K562 (cell line): ENCODE measurements at regions of chr15 and their contacts with region 1.

Region 1: GRCh38 chr15:32750979-32751378 is 33.2 kb downstream of the GREM1 start:
- DNase-seq: no peak
- ATAC-seq: no peak
- H3K4me3 ChIP-seq: no peak overlapping the region
- H3K27ac ChIP-seq: no peak overlapping the region
- H3K4me1 ChIP-seq: no peaks in the 10 kb centered on the region
- H3K27me3 ChIP-seq: peaks cover 0 to 3% of the 10 kb centered on the region in 2 experiments; a peak in 1 of 5 replicates
- CTCF ChIP-seq: no peak
- EP300 ChIP-seq: no peak
- POLR2A ChIP-seq: no peak
- RAD21 ChIP-seq: no peak

Region 2: GRCh38 chr15:32763295-32763694 is 12.3 kb after region 1 on chr15:
- CTCF ChIA-PET with region 1: no interaction called
- POLR2A ChIA-PET with region 1: no interaction called
- in situ Hi-C with region 1: no loop called
- intact Hi-C with region 1: no loop called
- DNase-seq: no peak
- ATAC-seq: no peak
- H3K4me3 ChIP-seq: no peak overlapping the region
- H3K27ac ChIP-seq: no peak overlapping the region
- H3K4me1 ChIP-seq: no peaks in the 10 kb centered on the region
- H3K27me3 ChIP-seq: peaks cover 0 to 4% of the 10 kb centered on the region in 2 experiments; a peak in 2 of 5 replicates
- CTCF ChIP-seq: no peak
- EP300 ChIP-seq: no peak
- POLR2A ChIP-seq: no peak
- RAD21 ChIP-seq: no peak

Region 3: GRCh38 chr15:32802286-32802936 is 51.4 kb after region 1 on chr15:
- CTCF ChIA-PET with region 1: no interaction called
- POLR2A ChIA-PET with region 1: no interaction called
- in situ Hi-C with region 1: no loop called
- intact Hi-C with region 1: loop called (anchors 10 kb)
- DNase-seq: no peak
- ATAC-seq: no peak
- H3K4me3 ChIP-seq: no peak overlapping the region
- H3K27ac ChIP-seq: no peak overlapping the region
- H3K4me1 ChIP-seq: no peaks in the 10 kb centered on the region
- H3K27me3 ChIP-seq: peaks cover 0 to 4% of the 10 kb centered on the region in 2 experiments; a peak in 2 of 5 replicates
- CTCF ChIP-seq: no peak
- EP300 ChIP-seq: no peak
- POLR2A ChIP-seq: no peak
- RAD21 ChIP-seq: no peak

Region 4: GRCh38 chr15:33419701-33420100 is 668.7 kb after region 1 on chr15:
- CTCF ChIA-PET with region 1: no interaction called
- POLR2A ChIA-PET with region 1: no interaction called
- in situ Hi-C with region 1: no loop called
- intact Hi-C with region 1: no loop called
- DNase-seq: no peak
- ATAC-seq: no peak
- H3K4me3 ChIP-seq: no peak overlapping the region
- H3K27ac ChIP-seq: no peak overlapping the region
- H3K4me1 ChIP-seq: no peaks in the 10 kb centered on the region
- H3K27me3 ChIP-seq: no peaks in the 10 kb centered on the region
- CTCF ChIP-seq: no peak
- EP300 ChIP-seq: no peak
- POLR2A ChIP-seq: no peak
- RAD21 ChIP-seq: no peak